IMR-90 (cell line): ENCODE measurements at regions of chr1 and their contacts with region 1.

Region 1: GRCh38 chr1:237590386-237590785 is 300.3 kb downstream of the ZP4 start:
- DNase-seq: no peak
- ATAC-seq: no peak
- H3K4me3 ChIP-seq: no peak overlapping the region
- H3K27ac ChIP-seq: no peak overlapping the region
- H3K4me1 ChIP-seq: no peaks in the 10 kb centered on the region
- H3K27me3 ChIP-seq: no peaks in the 10 kb centered on the region
- CTCF ChIP-seq: no peak
- POLR2A ChIP-seq: no peak
- RAD21 ChIP-seq: no peak

Region 2: DNA sequence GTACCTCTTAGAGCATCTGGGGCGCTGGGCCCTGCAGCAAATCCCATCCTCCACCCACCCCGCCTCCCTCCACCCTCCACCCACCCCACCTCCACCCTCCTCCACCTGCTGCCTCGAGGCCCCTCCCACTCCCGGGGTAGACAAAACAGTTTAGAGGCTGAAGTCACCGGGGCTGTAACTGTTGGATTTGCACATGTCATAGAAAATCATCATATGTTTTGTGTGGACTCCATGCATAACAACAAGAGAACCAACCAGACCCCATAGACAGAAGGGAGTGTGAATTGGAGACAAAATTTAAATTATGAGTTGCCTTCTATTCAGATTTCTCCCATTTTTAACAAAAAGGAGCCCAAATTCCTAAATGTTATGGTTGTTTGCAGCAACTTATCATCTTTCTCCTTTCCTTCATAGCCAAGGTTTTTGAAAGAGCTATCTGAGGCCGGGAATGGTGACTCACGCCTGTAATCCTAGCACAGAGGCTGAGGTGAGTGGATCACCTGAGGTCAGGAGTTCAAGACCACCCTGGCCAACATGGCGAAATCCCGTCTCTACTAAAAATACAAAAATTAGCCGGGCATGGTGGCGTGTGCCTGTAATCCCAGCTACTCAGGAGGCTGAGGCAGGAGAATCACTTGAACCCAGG is 1094.8 kb before region 1 on chr1:
- CTCF ChIA-PET with region 1: no interaction called
- POLR2A ChIA-PET with region 1: no interaction called
- dilution Hi-C with region 1: no loop called
- in situ Hi-C with region 1: no loop called
- intact Hi-C with region 1: loop called (anchors 5 kb)
- DNase-seq: no peak
- ATAC-seq: no peak
- H3K4me3 ChIP-seq: no peak overlapping the region
- H3K27ac ChIP-seq: no peak overlapping the region
- H3K4me1 ChIP-seq: no peaks in the 10 kb centered on the region; the same call in 1 of the 2 replicates
- H3K27me3 ChIP-seq: peaks cover 2% of the 10 kb centered on the region; the same call in 1 of the 2 replicates
- CTCF ChIP-seq: no peak
- POLR2A ChIP-seq: no peak
- RAD21 ChIP-seq: no peak

Region 3: GRCh38 chr1:237570530-237570929 is 19.9 kb before region 1 on chr1:
- CTCF ChIA-PET with region 1: no interaction called
- POLR2A ChIA-PET with region 1: no interaction called
- dilution Hi-C with region 1: no loop called
- in situ Hi-C with region 1: no loop called
- intact Hi-C with region 1: no loop called
- DNase-seq: no peak
- ATAC-seq: no peak
- H3K4me3 ChIP-seq: no peak overlapping the region
- H3K27ac ChIP-seq: no peak overlapping the region
- H3K4me1 ChIP-seq: no peaks in the 10 kb centered on the region
- H3K27me3 ChIP-seq: no peaks in the 10 kb centered on the region
- CTCF ChIP-seq: no peak
- POLR2A ChIP-seq: no peak
- RAD21 ChIP-seq: no peak